OCI-LY7 (cell line): ENCODE measurements at regions of chr3 and their contacts with region 1.

Region 1: DNA sequence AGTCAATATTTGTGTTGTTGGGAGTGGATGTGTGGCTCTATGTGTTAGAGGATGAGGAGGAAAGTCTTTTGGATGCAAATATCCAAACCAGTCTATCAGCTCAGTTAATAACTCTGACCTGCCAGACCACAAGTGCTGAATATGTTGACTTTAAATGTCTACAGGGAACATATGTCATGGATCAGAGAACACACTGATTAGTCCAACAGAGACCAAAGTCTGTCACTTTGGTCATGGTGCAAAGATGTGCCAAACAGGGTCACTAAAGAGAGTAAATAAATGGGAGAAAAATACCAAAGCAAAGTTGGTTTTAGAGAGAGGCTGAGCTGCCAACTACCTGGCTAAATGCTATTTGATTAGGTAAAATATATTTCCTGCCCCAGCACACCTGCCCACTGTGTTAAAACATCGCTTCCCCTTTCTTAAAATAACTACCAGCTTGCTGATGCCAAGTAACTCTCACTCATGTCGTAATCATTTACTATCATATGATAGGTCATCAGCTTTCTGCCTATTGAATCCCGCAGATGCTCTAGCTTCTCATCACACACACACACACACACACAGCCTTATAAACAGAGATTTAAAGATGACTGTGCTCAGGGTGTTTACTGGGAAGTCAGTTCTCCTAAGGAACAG is 173.3 kb downstream of the PDZRN3 start:
- DNase-seq: peak; percentile 64
- H3K4me3 ChIP-seq: peak overlapping the region; percentile 37
- H3K27ac ChIP-seq: peak overlapping the region; percentile 57
- H3K4me1 ChIP-seq: peaks cover 46% of the 10 kb centered on the region
- CTCF ChIP-seq: no peak

Region 2: DNA sequence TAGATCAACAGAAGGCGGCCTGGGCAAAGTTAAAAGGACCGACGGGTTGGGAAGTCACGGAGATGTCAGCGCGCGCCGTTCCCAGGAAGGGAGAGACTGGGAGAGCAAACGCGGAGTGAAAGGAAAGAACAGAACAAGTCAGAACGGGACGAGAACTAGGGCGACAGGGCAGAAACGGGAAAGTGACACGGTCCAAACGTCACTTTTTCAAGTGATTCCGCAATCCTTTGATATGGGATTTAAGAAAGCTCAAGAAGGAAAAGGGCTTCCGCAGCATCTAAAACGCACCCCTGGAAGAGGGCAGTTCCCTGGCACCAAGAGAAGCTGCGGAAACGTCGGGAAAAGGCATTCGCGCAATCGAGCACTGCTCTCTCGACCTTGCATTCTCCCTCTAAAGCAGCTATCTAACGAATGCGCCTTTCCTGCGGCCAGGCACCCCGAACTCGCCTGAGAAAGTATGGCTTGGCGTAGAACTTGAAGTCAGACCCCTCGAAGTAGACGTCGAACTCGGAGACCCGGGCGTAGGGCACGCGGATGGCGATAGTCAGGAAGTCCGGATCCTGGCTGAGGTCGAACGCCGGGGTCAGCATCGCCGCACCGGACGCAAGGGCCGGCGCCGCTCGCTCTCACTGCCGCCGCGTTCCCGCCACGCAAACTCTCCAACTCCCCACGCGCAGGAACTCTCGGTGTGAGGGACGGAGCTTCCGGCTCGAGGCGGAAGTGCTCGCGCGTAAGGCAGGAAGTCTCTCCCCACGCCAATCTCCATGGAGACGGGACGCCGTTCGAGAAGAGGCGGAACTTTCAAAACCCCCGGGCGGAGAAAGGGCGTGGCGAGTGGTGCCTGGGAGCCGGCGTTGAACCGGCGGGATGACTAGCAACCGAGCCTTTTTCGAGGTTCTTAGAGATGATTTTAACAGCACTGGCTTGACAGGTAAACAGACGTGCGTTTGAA is 603.4 kb before region 1 on chr3 and contains the start of gene SHQ1:
- CTCF ChIA-PET with region 1: no interaction called
- POLR2A ChIA-PET with region 1: no interaction called
- intact Hi-C with region 1: loop called (anchors 10 kb)
- DNase-seq: peak; percentile 96
- H3K4me3 ChIP-seq: peak within 1 kb of the TSS; percentile 83
- H3K27ac ChIP-seq: peak within 1 kb of the TSS; percentile 13
- H3K4me1 ChIP-seq: peaks cover 35% of the 10 kb centered on the region
- CTCF ChIP-seq: no peak
- total RNA-seq, gene SHQ1: 19.7 and 24.3 TPM in 2 replicates

Region 3: DNA sequence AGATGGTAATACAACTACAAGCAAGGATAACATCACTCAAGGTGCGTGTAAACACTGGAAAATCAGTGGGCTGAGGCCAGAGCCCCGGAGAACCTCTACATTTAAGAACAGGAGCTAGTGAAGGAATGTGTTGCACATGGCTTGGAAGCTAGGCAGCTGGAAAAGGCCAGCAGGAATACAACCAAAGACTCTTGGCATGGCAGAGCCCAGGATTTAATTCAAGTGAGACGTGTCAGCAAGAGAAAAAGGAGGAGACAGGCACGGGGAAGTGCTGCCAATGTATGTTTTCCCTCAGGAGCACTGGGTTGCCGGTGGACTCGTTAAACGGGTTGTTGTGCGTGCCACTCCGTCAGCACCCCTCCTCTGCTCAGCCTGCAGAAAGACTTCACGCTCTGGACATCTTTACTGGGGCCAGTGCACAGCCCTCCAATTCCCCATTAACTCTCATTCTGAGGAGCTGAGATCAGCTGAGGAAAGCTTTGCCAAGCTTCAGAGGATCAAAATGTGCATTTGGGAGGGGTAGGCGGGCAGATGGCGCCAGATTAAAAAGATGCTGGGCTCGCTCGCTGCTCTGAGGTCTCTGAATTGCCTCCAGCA is 69.5 kb after region 1 on chr3:
- CTCF ChIA-PET with region 1: no interaction called
- POLR2A ChIA-PET with region 1: no interaction called
- intact Hi-C with region 1: no loop called
- DNase-seq: no peak
- H3K4me3 ChIP-seq: no peak overlapping the region
- H3K27ac ChIP-seq: no peak overlapping the region
- H3K4me1 ChIP-seq: no peaks in the 10 kb centered on the region
- CTCF ChIP-seq: no peak

Region 4: GRCh38 chr3:73547427-73548248 is 96.2 kb after region 1 on chr3:
- CTCF ChIA-PET with region 1: no interaction called
- POLR2A ChIA-PET with region 1: no interaction called
- intact Hi-C with region 1: no loop called
- DNase-seq: no peak
- H3K4me3 ChIP-seq: no peak overlapping the region
- H3K27ac ChIP-seq: no peak overlapping the region
- H3K4me1 ChIP-seq: no peaks in the 10 kb centered on the region
- CTCF ChIP-seq: no peak